Posterior cingulate gyrus (tissue), 11 donors: ENCODE measurements at regions of chr17 and their contacts with region 1.

Region 1: GRCh38 chr17:40303009-40303657 is 5.8 kb upstream of the RARA start:
- DNase-seq: peak in 1 of 10 donors; percentile 39

Region 2: DNA sequence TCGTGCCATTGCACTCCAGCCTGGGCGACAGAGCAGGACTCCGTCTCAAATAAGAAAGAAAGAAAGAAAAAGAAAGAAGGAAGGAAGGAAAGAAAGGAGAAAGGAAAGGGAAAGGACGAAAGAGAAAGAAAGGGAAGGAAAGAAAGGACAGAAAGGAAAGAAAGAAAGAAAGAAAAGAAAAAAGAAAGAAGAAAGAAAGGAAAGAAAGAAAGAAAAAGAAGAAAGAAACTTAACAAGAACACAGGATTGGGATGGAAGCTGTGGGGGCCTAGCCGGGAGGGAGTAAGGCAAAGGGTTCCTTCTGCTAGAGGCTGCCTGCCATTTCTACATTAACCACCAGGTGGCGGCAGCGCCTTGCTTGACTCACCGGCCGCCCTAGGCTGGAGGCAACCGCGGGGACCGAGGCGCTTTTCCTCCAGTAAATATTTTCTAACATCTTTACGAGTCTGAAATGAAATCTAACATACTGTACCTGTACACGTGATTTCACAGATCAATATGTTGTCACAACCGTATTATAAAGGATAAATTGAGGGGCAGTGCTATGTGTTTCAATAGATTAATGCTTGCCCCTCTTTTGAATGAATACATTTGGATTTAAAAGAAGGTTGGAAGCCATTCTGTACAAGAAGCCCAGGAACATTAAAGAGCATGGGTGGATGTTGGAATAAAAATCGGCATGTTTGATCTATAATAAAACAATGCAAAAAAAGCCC is 55.3 kb after region 1 on chr17:
- intact Hi-C with region 1: loop called (anchors 1 kb)
- DNase-seq: peak; percentile 81 to 98 (median 94)

Region 3: DNA sequence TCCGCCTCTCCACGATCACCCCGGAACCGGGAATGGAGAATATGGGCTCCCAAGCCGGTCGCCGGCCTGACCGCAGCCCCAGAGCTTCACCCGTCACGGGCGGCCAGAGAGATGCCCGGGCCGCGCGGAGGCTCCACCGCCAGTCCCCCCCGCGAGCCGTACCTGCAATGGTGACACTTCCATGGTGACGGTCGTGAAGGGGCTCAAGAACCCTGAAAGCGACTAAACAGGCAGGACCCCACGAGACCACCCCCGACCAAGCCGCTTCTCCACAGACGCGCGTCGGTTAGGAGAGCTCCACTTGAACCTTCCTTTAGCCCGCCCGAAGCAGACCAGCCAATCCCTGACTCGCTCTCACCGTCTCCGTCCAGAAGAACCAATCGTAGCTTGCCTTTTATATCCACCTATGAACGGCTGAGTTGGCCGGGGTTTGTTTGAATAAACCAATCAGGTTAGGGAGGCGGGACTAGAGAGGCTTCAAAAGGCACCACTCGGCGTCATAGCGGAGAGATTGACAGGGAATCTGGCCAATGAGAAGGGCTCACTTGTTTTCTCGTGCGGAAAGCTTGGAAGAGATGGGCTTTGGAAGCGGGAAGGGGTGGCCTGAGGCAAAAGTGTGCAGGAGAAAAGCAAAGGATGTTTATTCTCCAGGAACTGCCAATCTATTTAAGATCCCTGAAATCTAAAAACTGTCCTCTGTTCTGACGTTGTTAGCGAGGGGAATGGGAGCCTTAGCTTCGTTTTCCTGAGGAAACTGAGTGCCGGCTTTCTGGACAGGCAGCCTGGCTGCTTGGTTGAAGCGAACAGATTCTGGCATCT is 114.7 kb after region 1 on chr17 and contains the start of gene TOP2A:
- intact Hi-C with region 1: loop called (anchors 10 kb)
- DNase-seq: peak; percentile 82 to 99 (median 96)

Region 4: DNA sequence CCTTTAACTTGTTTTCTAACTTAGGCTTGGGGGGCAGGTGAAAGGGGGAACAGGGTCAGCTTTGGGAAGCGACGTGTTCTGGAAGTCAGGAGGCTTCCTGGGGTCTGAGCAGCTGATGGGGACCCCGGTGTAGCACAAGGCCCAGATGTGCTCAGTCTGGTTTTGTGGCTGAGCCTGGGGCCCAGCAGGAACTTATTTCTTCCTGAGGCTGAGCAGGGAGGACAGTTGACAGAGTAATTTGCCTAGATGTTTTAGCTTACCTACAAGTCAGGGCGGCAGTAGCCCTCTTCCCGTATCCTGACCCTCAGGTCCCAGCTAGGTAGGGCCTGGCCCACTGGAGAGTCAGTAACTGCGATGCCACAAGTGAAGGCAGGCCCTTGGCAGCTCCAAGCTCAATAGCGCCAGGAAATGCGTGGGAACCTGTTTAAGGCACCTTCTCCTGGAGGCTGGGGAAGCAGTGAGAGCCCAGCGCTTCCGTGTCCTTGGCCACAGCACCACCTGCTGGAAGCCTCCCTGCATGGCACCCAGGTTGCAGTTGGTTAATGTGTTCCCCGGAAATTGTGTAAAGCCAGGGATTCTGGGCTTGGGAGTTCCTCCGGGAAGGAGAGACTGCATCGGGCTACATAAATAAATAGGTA is 256.9 kb after region 1 on chr17:
- intact Hi-C with region 1: loop called (anchors 10 kb)
- DNase-seq: peak; percentile 83 to 98 (median 91)

Region 5: GRCh38 chr17:40598663-40599467 is 295.7 kb after region 1 on chr17:
- intact Hi-C with region 1: no loop called
- DNase-seq: no peak